ENCODE measurements at regions of chr22 and their contacts with region 1.

Region 1: GRCh38 chr22:38793721-38794466 is at the start of gene DNAL4:
- DNase-seq: peak; percentile 96
- H3K4me3 ChIP-seq: peak within 1 kb of the TSS; percentile 54 to 76
- H3K27ac ChIP-seq: peak within 1 kb of the TSS; percentile 53 to 65
- H3K4me1 ChIP-seq: no peaks in the 10 kb centered on the region
- H3K27me3 ChIP-seq: no peaks in the 10 kb centered on the region
- CTCF ChIP-seq: peak in 2 of 4 experiments; percentile 5 to 19
- POLR2A ChIP-seq: peak; percentile 49
- total RNA-seq, gene DNAL4: 36.9 to 41.8 TPM

Region 2: DNA sequence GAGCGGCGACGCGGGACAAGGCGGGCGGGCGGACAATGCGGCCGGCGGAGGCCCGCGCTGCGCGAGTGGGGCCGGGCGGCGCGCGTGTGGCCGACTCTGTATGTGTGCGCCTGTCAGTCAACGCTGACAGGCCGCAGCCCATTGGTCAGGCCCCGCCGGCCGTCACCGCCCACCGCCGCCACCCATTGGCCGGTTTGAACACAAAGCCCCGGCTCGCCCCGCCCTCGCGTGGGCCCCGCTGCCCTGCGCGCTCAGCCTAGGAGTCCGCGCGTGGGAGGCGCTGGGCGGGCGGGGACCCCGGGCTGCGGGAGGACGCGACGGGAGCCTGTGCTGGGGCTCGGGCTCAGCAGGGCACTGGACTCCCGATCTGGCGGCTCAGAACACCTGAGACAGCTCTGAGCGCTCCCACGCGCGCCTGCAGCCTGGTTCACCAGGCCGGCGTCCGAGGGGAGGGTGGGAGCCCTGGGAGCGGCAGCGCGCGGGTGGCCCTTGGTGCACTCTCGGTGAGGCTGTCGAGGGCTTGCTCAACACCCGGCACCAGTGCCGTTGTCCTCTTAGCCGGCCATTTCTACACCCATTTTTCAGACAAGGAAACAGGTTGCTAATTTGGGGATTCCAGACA is 37.9 kb before region 1 on chr22 and contains the start of gene SUN2:
- intact Hi-C with region 1: loop called (anchors 5 kb)
- DNase-seq: peak; percentile 95
- H3K4me3 ChIP-seq: peak within 1 kb of the TSS; percentile 73 to 82
- H3K27ac ChIP-seq: peak within 1 kb of the TSS; percentile 97 to 99
- H3K4me1 ChIP-seq: peaks cover 20% of the 10 kb centered on the region
- H3K27me3 ChIP-seq: no peaks in the 10 kb centered on the region
- CTCF ChIP-seq: no peak
- POLR2A ChIP-seq: peak; percentile 80
- total RNA-seq, gene SUN2: 401 to 445 TPM

Measured in prostate gland (tissue), 2 donors.